GM12878 (cell line): ENCODE measurements at regions of chr1 and their contacts with region 1.

Region 1: GRCh38 chr1:238710697-238711096 is 675.7 kb upstream of the CHRM3 start:
- DNase-seq: no peak
- ATAC-seq: no peak
- H3K4me3 ChIP-seq: no peak overlapping the region
- H3K27ac ChIP-seq: no peak overlapping the region
- H3K4me1 ChIP-seq: no peaks in the 10 kb centered on the region
- H3K27me3 ChIP-seq: no peaks in the 10 kb centered on the region
- CTCF ChIP-seq: peak in 2 of 3 experiments; percentile 1 to 10; a peak in 1 of 6 replicates
- EP300 ChIP-seq: no peak
- POLR2A ChIP-seq: no peak
- RAD21 ChIP-seq: no peak

Region 2: DNA sequence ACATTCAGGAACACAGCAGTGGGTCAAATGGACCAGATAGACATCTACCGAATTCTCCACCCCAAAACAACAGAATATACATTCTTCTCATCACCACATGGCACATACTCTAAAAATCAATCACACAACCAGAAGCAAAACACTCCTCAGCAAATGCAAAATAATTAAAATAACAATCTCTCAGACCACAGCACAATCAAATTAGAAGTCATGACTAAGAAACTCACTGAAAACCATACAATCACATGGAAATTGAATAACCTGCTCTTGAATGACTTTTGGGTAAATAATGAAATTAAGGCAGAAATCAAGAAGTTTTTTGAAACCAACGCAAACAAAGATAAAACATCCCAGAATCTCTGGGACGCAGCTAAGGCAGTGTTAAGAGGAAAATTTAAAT is 869.2 kb before region 1 on chr1:
- CTCF ChIA-PET with region 1: no interaction called
- POLR2A ChIA-PET with region 1: no interaction called
- RAD21 ChIA-PET with region 1: no interaction called
- SMC1A ChIA-PET with region 1: no interaction called
- in situ Hi-C with region 1: no loop called
- intact Hi-C with region 1: loop called (anchors 10 kb)
- DNase-seq: no peak
- ATAC-seq: no peak
- H3K4me3 ChIP-seq: no peak overlapping the region
- H3K27ac ChIP-seq: no peak overlapping the region
- H3K4me1 ChIP-seq: no peaks in the 10 kb centered on the region
- H3K27me3 ChIP-seq: no peaks in the 10 kb centered on the region
- CTCF ChIP-seq: no peak
- EP300 ChIP-seq: no peak
- POLR2A ChIP-seq: no peak
- RAD21 ChIP-seq: no peak